Activated naive CD4-positive, alpha-beta T cell treated with anti-CD3 and anti-CD28 coated beads for 36 hours (primary cell): ENCODE measurements at regions of chr3 and their contacts with region 1.

Region 1: DNA sequence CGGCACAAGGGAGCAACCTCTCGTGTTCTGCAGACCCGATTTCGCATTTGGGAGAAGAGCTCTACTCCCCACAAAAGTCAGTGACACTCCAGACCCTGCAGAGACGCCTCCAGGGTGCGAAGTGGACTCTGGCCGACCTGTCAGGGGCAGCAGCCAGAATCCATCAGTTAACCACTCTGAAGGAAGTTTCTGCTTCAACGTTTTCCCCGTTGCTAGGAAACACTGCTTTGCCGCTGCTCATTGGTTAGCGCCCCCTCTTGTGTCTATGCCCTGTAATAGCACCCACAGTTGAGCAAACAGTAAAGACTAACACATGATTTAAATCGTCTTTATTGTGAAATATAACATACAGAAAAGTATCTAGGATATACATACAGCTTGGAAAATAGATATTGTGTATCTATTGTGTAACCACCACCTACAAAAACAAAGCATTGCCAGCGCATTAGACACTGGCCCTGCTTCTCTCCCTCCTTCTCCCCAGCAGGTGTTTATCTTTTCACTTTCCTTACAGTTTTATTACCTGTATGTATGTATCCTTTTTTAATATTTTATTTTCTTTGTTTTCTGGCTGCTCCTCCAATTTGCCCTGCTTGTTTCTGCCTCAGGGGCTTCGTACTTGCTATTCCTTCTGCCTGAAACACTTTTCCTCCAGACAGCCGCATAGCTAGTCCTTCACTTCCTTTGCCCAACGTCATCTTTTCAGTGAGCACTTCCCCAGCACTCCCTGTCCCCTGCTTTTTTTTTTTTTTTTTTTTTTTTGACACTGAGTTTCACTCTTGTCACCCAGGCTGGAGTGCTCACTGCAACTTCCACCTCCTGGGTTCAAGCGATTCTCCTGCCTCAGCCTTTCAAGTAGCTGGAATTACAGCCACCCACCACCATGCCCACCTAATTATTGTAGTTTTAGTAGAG is 38.8 kb downstream of the TMEM40 start:
- DNase-seq: peak; percentile 83
- H3K4me3 Mint-ChIP-seq: peak overlapping the region; percentile 56
- H3K27ac Mint-ChIP-seq: no peak overlapping the region
- H3K4me1 Mint-ChIP-seq: peaks cover 9% of the 10 kb centered on the region
- H3K27me3 Mint-ChIP-seq: no peaks in the 10 kb centered on the region

Region 2: GRCh38 chr3:12556671-12557472 is 163.4 kb before region 1 on chr3 and contains the start of gene MKRN2:
- CTCF ChIA-PET with region 1: interaction called, 4 read pairs
- intact Hi-C with region 1: loop called (anchors 2 kb)
- DNase-seq: peak; percentile 83
- H3K4me3 Mint-ChIP-seq: peak within 1 kb of the TSS; percentile 78
- H3K27ac Mint-ChIP-seq: peak within 1 kb of the TSS; percentile 88
- H3K4me1 Mint-ChIP-seq: peaks cover 48% of the 10 kb centered on the region
- H3K27me3 Mint-ChIP-seq: peaks cover 24% of the 10 kb centered on the region
- total RNA-seq, gene MKRN2: 32.9 to 34.5 TPM

Region 3: DNA sequence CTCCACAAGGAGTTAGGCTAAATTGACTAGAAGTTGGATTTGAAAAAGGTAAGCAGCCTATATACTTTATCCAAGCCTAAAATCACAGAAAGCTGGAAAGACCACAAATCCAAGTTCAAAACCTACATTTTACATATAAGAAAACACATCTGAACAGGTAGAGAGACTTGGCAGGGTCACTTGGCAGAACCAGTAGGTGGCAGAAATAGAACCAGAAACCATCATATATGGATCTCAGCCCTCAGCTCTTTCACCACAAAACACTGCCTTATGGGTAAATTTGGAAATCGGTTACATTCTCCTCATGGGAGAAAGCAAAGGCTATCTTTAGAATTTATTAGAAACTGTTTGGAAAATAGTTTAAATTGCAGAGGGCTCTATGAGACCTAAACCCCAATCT is 119.2 kb before region 1 on chr3:
- CTCF ChIA-PET with region 1: interaction called, 8 read pairs
- intact Hi-C with region 1: loop called (anchors 5 kb)
- DNase-seq: no peak
- H3K4me3 Mint-ChIP-seq: no peak overlapping the region
- H3K27ac Mint-ChIP-seq: no peak overlapping the region
- H3K4me1 Mint-ChIP-seq: no peaks in the 10 kb centered on the region
- H3K27me3 Mint-ChIP-seq: no peaks in the 10 kb centered on the region

Region 4: DNA sequence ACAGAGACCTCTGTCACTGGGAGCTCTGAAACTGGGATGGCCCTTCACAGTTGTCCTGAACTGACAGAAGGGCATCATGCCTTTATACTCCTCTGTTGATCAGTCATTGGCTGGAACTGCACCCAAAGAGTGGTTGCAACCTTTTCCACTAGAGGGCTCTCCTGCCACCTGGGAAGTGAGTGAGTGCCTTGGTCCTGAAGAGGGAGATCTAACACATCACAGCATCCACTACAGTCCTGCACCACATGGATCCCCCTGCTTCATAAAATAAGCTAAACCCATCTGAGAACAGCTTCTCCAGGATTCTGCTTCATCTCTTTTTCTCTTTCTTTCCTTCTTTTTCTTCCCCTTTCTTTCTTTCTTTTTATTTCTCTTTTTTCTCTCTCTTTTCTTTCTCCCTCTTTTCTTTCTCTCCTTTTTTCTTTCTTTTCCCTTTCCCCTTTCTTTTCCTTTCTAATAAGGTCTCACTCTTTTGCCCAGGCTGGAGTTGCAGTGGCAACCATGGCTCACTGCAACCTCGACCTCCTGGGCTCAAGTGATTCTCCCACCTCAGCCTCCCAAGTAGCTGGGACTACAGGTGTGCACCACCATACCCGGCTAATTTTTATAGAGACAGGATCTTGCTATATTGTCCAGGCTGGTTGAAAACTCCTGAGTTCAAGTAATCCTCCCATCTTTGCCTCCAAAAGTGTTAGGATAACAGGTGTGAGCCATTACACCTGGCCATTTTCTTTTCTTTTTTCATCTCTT is 13.6 kb before region 1 on chr3:
- CTCF ChIA-PET with region 1: interaction called, 15 read pairs
- intact Hi-C with region 1: no loop called
- DNase-seq: peak; percentile 80
- H3K4me3 Mint-ChIP-seq: no peak overlapping the region
- H3K27ac Mint-ChIP-seq: no peak overlapping the region
- H3K4me1 Mint-ChIP-seq: no peaks in the 10 kb centered on the region
- H3K27me3 Mint-ChIP-seq: no peaks in the 10 kb centered on the region

Region 5: DNA sequence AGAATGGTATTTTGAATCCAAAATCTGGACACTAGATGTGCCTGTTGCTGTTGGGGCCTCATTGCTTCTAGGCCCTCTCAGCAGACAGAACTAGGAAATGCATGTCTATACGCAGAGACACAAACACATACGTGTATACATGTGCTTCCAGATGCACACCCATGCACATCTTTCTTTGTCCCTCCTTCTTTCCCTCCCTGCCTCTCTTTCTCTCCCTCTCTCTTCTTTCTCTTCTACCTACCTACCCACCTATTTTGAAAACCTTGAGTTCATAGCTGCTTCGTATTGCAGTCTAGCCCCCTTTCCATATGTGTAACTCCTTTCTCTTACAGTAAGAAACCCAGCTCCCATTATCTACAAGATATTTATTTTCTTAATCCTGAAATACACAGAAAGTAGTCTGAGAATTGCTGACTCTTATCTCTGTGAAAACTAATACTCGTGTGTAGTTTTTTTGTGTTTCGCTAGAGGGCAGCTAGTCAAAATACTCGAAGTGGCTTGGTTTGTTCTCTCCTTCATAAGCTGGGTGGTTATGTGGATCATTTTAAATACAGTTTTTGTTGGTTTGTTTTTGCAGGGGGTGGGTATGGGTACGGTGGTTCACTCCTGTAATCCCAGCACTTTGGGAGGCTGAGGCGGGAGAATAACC is 102.6 kb after region 1 on chr3:
- CTCF ChIA-PET with region 1: no interaction called
- intact Hi-C with region 1: no loop called
- DNase-seq: no peak
- H3K4me3 Mint-ChIP-seq: no peak overlapping the region
- H3K27ac Mint-ChIP-seq: no peak overlapping the region
- H3K4me1 Mint-ChIP-seq: no peaks in the 10 kb centered on the region
- H3K27me3 Mint-ChIP-seq: no peaks in the 10 kb centered on the region